Activated CD4-positive, alpha-beta T cell treated with anti-CD3 and anti-CD28 coated beads for 36 hours (primary cell): ENCODE measurements at regions of chr12 and their contacts with region 1.

Region 1: GRCh38 chr12:98532681-98533304 is 17.4 kb downstream of the TMPO start:
- DNase-seq: no peak
- ATAC-seq: peak; percentile 61
- H3K4me3 Mint-ChIP-seq: no peak overlapping the region
- H3K27ac Mint-ChIP-seq: no peak overlapping the region
- H3K4me1 Mint-ChIP-seq: peaks cover 5% of the 10 kb centered on the region
- H3K27me3 Mint-ChIP-seq: no peaks in the 10 kb centered on the region

Region 2: DNA sequence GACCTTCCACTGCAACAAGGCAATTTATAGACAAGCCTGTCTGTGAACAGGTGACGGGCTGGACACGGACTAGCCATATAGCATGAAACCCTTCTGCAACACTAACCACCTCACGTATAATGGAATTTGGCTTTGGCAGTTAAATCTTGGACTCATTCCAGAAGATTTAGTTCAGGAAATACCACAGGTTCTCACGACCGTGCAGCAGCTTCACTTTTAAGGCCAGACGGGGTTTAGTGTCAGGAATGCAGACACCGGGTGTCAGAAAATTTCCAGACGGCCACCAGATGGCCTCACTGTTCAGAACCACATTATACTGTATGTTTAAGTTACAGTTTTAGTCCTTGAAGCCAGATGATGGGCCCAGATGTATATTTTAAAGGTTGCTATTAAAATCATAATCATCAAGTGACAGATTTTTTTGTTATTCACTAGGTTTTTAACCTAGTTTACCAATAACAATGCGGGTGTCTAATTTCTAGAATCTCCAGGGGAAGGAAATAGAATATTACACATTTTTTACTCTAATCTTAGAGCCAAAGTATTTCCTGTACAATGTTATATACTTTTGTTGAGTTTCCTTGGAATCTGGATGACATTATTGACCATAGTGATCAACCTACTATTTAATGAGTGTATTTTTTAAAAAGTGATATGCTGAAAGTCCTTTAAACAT is 107.9 kb before region 1 on chr12:
- CTCF ChIA-PET with region 1: interaction called, 3 read pairs
- POLR2A ChIA-PET with region 1: no interaction called
- intact Hi-C with region 1: loop called (anchors 1 to 5 kb)
- DNase-seq: peak; percentile 75
- ATAC-seq: peak; percentile 88
- H3K4me3 Mint-ChIP-seq: no peak overlapping the region
- H3K27ac Mint-ChIP-seq: no peak overlapping the region
- H3K4me1 Mint-ChIP-seq: no peaks in the 10 kb centered on the region
- H3K27me3 Mint-ChIP-seq: peaks cover 1% of the 10 kb centered on the region

Region 3: DNA sequence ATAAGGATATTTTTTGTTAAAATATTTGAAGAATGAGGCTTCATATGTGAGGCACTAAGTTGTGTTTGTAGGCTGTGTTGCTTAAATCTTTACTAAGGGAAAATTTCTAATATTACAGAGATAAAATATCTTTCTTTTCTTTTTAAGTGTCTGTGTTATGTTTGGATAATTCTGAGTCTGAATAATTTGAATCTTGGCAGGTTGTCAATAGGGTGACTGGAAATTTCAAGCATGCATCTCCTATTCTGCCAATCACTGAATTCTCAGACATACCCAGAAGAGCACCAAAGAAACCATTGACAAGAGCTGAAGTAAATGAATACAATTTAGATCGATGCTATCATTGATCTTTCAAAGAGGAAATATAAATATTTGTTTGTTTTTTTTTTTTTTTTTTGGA is 12.0 kb after region 1 on chr12:
- CTCF ChIA-PET with region 1: interaction called, 14 read pairs
- POLR2A ChIA-PET with region 1: no interaction called
- intact Hi-C with region 1: loop called in 1 of 2 experiments (anchors 2 kb)
- DNase-seq: no peak
- ATAC-seq: no peak
- H3K4me3 Mint-ChIP-seq: no peak overlapping the region
- H3K27ac Mint-ChIP-seq: no peak overlapping the region
- H3K4me1 Mint-ChIP-seq: peaks cover 2% of the 10 kb centered on the region
- H3K27me3 Mint-ChIP-seq: no peaks in the 10 kb centered on the region

Region 4: DNA sequence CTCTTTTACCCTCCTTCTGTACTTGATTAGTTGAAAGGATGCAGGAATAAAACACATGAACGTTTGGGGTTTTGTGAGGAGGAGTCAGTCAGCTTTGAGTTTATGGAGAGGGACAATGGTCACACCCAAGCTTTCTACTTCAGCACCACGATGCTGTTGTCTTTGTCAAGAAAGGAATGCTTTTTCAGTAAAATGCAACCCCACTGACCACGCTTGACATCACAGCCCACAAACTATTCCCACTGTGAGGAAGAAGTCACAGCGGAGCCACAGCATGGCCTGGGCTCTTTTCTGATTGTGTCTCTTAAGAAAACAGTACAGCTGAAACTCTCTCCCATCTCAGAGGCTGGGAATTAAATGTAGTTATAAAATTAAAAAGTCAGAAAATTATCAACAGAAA is 247.5 kb after region 1 on chr12:
- CTCF ChIA-PET with region 1: no interaction called
- POLR2A ChIA-PET with region 1: no interaction called
- intact Hi-C with region 1: no loop called
- DNase-seq: no peak
- ATAC-seq: no peak
- H3K4me3 Mint-ChIP-seq: no peak overlapping the region
- H3K27ac Mint-ChIP-seq: no peak overlapping the region
- H3K4me1 Mint-ChIP-seq: no peaks in the 10 kb centered on the region
- H3K27me3 Mint-ChIP-seq: peaks cover 18% of the 10 kb centered on the region